ENCODE measurements at regions of chr1 and their contacts with region 1.

Region 1: GRCh38 chr1:149962123-149962548 is 25.5 kb upstream of the MTMR11 start:
- DNase-seq: peak; percentile 62
- H3K4me3 ChIP-seq: no peak overlapping the region
- H3K27ac ChIP-seq: no peak overlapping the region
- H3K27me3 ChIP-seq: no peaks in the 10 kb centered on the region
- CTCF ChIP-seq: peak; percentile 75

Region 2: DNA sequence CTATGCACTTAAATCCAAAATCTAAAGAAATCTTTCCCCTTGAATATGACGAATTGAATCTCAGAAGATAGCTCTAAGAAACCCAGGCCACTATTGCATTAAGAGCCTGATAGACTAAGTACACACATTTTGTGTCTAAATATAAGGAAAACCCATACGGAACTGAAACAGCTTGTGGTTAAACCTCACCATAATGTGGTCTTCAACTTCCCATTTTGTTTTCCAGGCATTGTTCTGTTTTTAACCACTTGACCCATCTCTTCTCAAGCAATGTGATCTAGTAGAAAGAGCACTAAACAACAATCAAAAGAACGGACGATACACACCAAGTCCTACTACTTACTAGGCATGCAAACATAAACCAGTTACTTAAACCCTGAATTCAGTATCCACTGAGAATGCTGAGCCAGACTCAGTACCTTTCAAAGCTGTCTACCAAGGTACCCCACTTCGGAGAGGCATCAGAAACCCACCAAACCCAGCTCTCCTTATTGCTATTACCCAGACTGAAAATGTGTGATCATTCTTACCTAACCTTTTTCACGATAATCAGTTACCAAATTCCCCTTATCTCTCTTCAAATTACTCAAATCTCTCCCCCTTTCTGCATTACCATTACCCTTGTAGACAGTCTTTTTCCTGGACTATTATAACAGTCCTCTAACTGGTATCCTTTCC is 35.6 kb after region 1 on chr1:
- CTCF ChIA-PET with region 1: interaction called, 33 read pairs
- POLR2A ChIA-PET with region 1: no interaction called
- DNase-seq: no peak
- H3K4me3 ChIP-seq: no peak overlapping the region
- H3K27ac ChIP-seq: no peak overlapping the region
- H3K27me3 ChIP-seq: no peaks in the 10 kb centered on the region
- CTCF ChIP-seq: no peak

Region 3: DNA sequence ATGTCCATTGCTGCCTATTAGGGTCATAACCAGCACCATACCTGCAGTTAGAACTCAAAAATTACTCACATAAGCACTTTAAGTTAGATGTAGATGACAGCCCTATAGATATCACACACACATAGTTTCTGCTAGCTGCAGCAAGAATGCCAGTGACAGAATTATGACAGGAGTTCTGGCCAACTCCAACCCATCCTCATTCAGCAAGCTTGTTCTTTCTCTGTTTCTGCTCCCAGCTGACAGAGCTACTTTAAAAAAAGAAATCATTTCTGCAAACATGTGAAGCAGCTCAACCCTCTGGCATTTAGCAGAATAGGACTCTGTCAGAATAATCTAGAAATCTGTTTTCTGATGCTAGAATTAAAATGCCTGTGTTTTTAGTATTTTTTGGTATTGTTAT is 72.2 kb after region 1 on chr1:
- CTCF ChIA-PET with region 1: interaction called, 11 read pairs
- POLR2A ChIA-PET with region 1: no interaction called
- DNase-seq: no peak
- H3K4me3 ChIP-seq: no peak overlapping the region
- H3K27ac ChIP-seq: no peak overlapping the region
- H3K27me3 ChIP-seq: no peaks in the 10 kb centered on the region
- CTCF ChIP-seq: no peak

Region 4: DNA sequence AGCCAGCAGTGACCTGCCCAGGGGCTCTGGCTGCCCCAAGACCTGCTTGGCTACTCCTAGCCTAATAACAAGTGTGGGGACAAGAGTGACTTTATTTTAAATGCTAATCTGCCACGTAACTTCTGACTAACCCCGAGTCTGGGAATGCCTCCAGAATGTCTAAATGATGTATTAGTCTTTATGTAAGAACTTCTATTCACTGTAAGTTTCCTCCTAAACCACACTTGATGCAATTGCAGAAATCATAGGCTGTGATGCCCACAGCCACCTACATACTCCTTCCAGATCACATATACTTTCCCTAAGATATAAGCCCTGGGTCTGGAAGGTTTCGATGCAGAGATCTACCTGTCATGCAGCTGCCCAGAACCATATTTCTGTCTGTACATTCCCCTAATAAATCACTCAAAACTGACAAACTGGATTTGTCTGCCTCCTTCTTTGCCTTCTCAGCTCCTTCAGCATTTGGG is 99.5 kb after region 1 on chr1:
- CTCF ChIA-PET with region 1: interaction called, 14 read pairs
- POLR2A ChIA-PET with region 1: no interaction called
- DNase-seq: peak; percentile 82
- H3K4me3 ChIP-seq: no peak overlapping the region
- H3K27ac ChIP-seq: peak overlapping the region; percentile 91
- H3K27me3 ChIP-seq: no peaks in the 10 kb centered on the region
- CTCF ChIP-seq: no peak

Region 5: DNA sequence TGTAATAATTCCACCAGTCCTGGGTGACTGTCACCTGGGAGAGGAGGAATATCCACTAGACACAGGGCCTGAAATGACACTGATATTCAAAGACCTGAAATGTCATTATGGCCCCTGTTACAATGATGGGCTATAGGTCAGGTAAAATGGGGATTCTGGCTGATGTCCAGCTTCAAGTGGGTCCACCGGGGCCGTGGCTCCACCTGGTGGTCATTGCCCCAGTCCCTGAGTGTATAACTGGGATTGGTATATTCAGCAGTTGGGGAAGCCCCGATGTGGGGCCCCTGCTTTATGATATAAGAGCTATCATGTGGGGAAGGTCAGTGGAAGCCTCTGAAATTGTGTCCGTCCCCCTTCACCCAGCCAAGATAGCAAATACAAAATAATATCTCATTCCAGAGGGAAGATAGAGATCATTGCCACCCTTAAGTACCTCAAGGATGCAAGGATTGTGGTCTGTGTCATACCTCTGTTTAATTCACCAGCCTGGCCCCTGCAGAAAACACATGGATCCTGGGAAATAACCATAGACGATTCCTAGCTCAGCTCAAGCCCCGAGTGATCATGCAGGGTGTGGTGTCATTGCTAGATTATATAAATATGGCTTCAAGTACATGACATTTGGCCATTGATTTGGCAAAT is 206.9 kb after region 1 on chr1:
- CTCF ChIA-PET with region 1: interaction called, 33 read pairs
- POLR2A ChIA-PET with region 1: no interaction called
- DNase-seq: no peak
- H3K4me3 ChIP-seq: no peak overlapping the region
- H3K27ac ChIP-seq: no peak overlapping the region
- H3K27me3 ChIP-seq: no peaks in the 10 kb centered on the region
- CTCF ChIP-seq: peak; percentile 89

Region 6: DNA sequence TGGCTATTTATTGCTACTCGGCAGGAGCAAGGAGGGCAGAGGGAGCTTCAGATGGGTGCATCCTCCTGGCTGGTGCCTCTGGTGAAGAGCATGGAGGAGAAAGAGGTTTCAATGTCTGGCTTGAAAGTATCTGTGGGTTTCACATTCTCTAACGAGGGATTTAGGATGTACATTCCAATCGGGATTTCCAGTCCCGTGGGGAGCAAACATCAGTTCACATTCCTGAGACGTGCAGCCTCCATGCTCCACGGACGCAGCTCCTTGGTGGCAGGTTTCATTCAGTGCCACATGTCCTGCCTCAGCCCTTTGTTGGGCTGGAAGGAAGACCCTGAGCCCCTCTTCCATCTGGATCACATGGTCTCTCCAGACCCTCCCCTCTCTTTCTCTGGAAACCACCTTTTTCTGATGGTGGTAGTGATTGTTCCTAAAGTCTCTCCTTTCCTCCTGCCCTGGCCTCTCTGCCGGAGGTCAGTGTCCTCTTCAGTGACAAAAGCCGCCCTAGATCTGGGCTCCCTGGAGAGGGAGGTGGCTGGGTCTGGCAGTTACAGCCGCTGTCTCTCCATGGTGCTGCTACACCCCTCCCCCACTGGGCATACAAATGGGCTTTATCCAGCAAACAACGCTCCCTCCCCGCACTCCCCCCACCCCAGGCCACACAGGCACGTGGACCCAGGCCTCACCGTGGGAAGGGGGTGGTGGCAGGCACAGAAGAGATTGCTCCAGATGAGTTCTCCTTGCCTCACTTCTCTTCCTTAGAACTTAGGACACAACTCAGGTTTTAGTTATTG is 294.6 kb after region 1 on chr1:
- CTCF ChIA-PET with region 1: no interaction called
- POLR2A ChIA-PET with region 1: no interaction called
- DNase-seq: no peak
- H3K4me3 ChIP-seq: no peak overlapping the region
- H3K27ac ChIP-seq: no peak overlapping the region
- H3K27me3 ChIP-seq: peaks cover 5% of the 10 kb centered on the region
- CTCF ChIP-seq: no peak

Region 7: GRCh38 chr1:150321826-150322166 is 359.7 kb after region 1 on chr1:
- CTCF ChIA-PET with region 1: no interaction called
- POLR2A ChIA-PET with region 1: no interaction called
- DNase-seq: no peak
- H3K4me3 ChIP-seq: peak overlapping the region; percentile 92
- H3K27ac ChIP-seq: peak overlapping the region; percentile 61
- H3K27me3 ChIP-seq: no peaks in the 10 kb centered on the region
- CTCF ChIP-seq: no peak